Mammary epithelial cell (primary cell): ENCODE measurements at regions of chr16 and their contacts with region 1.

Region 1: GRCh38 chr16:67910158-67910557 is 17.1 kb downstream of the PSKH1 start:
- DNase-seq: peak; percentile 81
- H3K4me3 ChIP-seq: no peak overlapping the region
- H3K27ac ChIP-seq: peak overlapping the region; percentile 22
- H3K4me1 ChIP-seq: peaks cover 11% of the 10 kb centered on the region
- H3K27me3 ChIP-seq: no peaks in the 10 kb centered on the region
- CTCF ChIP-seq: no peak

Region 2: GRCh38 chr16:67979955-67980678 is 70.0 kb after region 1 on chr16 and contains the start of gene DPEP3:
- CTCF ChIA-PET with region 1: no interaction called
- dilution Hi-C with region 1: loop called (anchors 5 kb)
- in situ Hi-C with region 1: no loop called
- intact Hi-C with region 1: no loop called
- DNase-seq: no peak
- H3K4me3 ChIP-seq: no peak within 1 kb of the TSS
- H3K27ac ChIP-seq: no peak within 1 kb of the TSS
- H3K4me1 ChIP-seq: peaks cover 9% of the 10 kb centered on the region
- H3K27me3 ChIP-seq: no peaks in the 10 kb centered on the region
- CTCF ChIP-seq: peak; percentile 10
- total RNA-seq, gene DPEP3: not detected